Sigmoid colon (tissue), 7 donors: ENCODE measurements at regions of chr22 and their contacts with region 1.

Region 1: GRCh38 chr22:18077639-18078328 is at the start of gene PEX26:
- DNase-seq: peak; percentile 97
- H3K4me3 ChIP-seq: peak within 1 kb of the TSS; percentile 62 to 96 (median 88)
- H3K27ac ChIP-seq: peak within 1 kb of the TSS; percentile 80 to 86 (median 83)
- H3K4me1 ChIP-seq: peaks cover 0 to 39% (median 38%) of the 10 kb centered on the region in 4 donors
- H3K27me3 ChIP-seq: no peaks in the 10 kb centered on the region
- CTCF ChIP-seq: no peak
- EP300 ChIP-seq: no peak
- POLR2A ChIP-seq: peak; percentile 15 to 35
- total RNA-seq, gene PEX26: 13.3 to 21.3 (median 17.7) TPM

Region 2: DNA sequence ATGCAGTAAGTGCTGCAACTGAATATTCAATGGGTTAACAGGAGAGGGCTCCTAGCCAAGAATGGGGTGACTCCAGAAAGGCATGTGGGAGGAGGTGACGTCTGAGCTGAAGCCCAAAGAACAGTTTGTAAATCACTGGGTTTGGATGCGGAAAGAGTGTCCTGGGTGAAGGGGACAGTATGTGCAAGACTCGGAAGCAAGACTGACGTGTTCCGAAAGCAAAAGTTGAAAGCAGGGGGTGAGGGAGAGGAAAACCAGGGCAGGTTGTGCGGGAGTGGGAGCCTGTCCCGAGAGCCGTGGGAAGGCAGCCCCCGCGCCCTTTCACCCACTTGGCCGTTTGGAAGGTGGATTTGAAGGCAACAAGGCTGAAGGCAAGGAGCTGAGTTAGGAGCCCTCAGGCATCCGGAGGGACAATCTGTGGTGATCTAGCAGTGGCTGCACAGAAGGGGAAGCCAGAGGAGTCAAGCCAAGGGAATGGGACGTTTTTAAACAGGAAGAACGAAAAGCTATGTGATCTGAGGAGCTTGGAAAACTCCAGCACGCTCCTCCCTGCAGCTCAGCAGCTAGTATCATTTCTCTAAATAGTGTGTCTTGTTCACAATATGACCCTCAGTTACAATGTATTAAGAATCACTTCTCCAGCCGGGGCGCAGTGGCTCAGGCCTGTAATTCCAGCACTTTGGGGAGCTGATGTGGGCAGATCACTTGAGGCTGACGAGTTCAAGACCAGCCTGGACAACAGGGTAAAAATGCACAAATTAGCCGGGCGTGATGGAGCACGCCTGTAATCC is 506.7 kb before region 1 on chr22:
- intact Hi-C with region 1: loop called (anchors 5 kb)
- DNase-seq: peak; percentile 98
- H3K4me3 ChIP-seq: peak overlapping the region; percentile 17 to 41 (median 37)
- H3K27ac ChIP-seq: peak overlapping the region; percentile 77 to 96 (median 91)
- H3K4me1 ChIP-seq: peaks cover 0 to 31% (median 27%) of the 10 kb centered on the region in 4 donors
- H3K27me3 ChIP-seq: no peaks in the 10 kb centered on the region
- CTCF ChIP-seq: no peak
- EP300 ChIP-seq: peak; percentile 99 to 100 (median 100)
- POLR2A ChIP-seq: peak in 1 of 2 donors; percentile 36

Region 3: DNA sequence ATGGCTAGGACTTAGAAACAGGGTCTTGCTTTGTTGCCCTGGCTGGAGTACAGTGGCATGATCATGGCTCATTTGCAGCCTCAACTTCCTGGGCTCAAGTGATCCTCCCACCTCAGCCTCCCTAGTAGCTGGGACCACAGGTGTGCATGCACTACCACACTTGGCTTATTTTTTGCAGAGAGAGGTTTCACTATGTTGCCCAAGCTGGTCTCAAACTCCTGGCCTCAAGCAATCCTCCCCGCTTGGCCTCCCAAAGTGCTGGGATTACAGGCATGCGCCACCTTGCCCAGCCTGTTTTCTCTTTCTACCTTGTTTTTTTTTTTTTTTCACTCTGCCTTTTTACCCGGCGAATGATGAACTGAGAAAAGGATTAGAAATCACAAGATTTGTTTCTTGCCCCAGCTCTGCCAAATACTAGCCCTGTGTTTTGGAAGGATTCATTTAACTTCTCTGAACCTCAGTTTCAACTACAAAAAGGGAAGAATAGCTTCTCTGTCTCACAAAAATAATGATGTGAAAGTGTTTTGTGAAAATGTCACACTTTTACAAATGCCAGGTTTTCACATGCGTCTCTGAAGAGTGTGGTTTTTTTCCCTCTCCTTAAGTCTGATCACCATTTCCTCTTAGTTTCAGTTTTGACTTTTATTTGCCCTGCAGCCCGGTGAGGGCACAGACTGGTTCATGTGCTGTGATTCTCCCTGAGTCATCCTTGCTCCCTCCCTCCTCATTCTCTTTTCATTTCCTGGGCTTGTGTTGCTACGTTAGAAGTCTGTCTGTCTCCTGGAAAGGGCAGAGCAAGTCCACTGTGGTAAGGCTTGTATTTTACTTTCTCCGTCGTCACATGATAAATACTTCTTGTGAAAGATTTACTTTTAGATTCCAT is 371.5 kb before region 1 on chr22:
- intact Hi-C with region 1: loop called (anchors 10 kb)
- DNase-seq: peak; percentile 75
- H3K4me3 ChIP-seq: peak overlapping the region; percentile 24 to 47 (median 34)
- H3K27ac ChIP-seq: peak overlapping the region; percentile 76 to 84 (median 80)
- H3K4me1 ChIP-seq: peaks cover 0 to 27% (median 23%) of the 10 kb centered on the region in 4 donors
- H3K27me3 ChIP-seq: no peaks in the 10 kb centered on the region
- CTCF ChIP-seq: no peak
- EP300 ChIP-seq: peak in 1 of 4 donors; percentile 23
- POLR2A ChIP-seq: peak in 1 of 2 donors; percentile 47

Region 4: DNA sequence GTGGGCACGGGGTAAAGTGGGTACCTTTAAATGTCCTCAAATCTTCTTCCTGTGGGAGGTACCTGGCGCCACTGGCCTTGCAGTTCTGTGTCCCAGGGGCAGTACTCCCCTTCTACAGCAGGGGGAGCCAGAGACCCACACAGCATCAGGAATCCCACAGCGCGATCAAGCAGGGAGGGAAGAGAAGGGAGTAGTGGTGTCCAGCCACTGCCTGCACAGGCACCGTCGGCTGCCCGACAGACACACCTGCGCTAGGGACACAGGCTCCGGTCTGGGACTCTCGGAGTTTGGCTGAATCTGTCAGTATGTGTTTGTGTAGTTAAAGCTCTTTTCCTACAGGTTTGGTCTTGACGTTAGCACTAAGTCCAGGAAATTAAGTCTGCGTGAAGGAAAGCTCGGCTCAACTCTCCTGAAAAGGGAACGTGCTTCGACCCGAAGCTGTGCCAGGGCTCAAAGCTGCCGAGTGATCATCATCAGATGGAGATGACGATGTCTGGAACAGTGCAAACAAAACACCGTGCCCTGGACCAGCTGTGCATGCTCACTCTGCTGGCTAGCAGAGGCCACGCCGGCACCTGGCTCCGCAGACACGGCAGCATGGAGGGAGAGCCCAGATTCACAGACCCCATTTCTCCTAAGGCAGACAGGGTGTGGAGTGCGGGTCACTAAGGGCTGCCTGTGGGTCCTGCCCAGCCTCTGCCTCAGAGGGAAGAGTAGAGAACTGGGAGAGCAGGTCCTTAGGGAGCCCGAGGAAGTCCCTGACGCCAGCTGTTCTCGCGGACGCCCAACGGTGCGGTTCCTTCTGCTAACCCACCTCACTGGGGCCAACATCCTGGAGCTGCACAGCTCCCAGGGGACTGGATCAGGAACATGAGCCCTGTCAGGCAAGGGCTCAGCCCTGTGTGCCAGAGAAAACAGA is 247.5 kb before region 1 on chr22:
- intact Hi-C with region 1: loop called (anchors 1 kb)
- DNase-seq: peak; percentile 93
- H3K4me3 ChIP-seq: no peak overlapping the region
- H3K27ac ChIP-seq: peak overlapping the region; percentile 69 to 85 (median 80)
- H3K4me1 ChIP-seq: peaks cover 0 to 34% (median 31%) of the 10 kb centered on the region in 4 donors
- H3K27me3 ChIP-seq: no peaks in the 10 kb centered on the region
- CTCF ChIP-seq: peak; percentile 99 to 100 (median 99)
- EP300 ChIP-seq: no peak
- POLR2A ChIP-seq: no peak

Region 5: GRCh38 chr22:17950651-17951214 is 127.1 kb before region 1 on chr22:
- intact Hi-C with region 1: no loop called
- DNase-seq: peak; percentile 75
- H3K4me3 ChIP-seq: no peak overlapping the region
- H3K27ac ChIP-seq: peak overlapping the region; percentile 14 to 50 (median 44)
- H3K4me1 ChIP-seq: peaks cover 0 to 71% (median 45%) of the 10 kb centered on the region in 4 donors
- H3K27me3 ChIP-seq: no peaks in the 10 kb centered on the region
- CTCF ChIP-seq: no peak
- EP300 ChIP-seq: no peak
- POLR2A ChIP-seq: no peak

Region 6: DNA sequence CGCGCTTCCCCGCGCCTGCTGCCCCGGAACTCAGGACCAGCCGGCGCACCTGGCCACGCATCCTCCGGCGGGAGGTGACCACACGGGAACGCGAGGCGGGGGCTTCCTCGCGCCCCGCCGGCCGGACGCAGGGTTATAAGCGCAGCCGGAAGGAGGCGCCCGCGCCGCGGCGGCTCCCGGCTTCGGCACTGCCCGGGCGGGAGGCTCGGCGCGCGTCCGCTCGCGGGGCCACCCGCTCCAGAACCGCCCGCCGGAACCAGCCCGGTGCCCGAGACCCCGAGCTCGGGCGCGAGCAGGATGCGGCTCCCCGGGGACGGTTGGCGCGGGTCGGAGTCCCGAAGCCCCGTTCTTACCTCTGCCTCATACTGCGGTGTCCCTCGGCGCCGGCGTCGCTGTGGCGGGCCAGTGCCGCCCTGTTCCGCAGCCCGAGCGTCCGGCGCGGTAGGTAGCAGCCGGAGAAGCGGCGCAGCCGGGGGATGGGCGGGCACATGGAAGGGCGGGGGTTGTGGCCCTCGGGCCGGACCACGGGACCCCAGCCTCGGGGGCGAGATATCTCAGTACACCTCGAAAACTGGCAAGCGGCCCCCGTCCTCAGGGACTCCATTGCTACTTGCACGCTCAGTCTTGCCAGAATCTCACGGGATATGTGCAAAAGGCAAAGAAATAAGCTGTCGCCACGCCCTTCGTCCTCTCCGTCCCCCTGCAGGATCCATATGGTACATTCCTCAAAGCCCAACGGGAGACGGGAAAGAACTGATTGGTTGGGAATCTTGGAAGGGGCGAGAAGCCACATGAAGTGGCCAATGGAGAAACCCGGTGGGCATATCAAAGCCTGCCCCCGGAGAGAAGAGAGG is 76.5 kb before region 1 on chr22:
- intact Hi-C with region 1: loop called (anchors 5 kb)
- DNase-seq: peak; percentile 97
- H3K4me3 ChIP-seq: peak overlapping the region; percentile 73 to 87 (median 83)
- H3K27ac ChIP-seq: peak overlapping the region; percentile 89 to 94 (median 92)
- H3K4me1 ChIP-seq: peaks cover 0 to 53% (median 38%) of the 10 kb centered on the region in 4 donors
- H3K27me3 ChIP-seq: no peaks in the 10 kb centered on the region
- CTCF ChIP-seq: peak in 2 of 4 experiments; percentile 49 to 61
- EP300 ChIP-seq: no peak
- POLR2A ChIP-seq: peak; percentile 57 to 62

Region 7: DNA sequence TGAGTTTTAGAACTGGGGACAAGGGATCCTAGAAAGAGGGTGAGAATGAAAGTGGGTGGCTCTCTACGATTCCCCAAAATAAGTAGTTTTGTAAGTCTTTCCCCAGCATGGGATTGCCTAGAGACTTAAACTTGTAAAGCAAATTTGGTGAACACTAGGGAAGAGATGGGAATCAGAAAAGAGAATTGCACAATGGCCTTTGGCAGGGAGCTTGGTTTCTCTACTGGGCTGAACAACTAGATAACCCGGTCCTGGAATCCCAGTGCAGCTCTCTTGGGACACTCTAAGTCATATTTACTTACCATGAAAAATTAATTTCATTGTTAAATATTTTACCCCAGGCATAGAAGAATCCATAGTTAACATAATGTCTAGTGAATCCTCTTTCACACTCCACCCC is 55.7 kb after region 1 on chr22:
- intact Hi-C with region 1: no loop called
- DNase-seq: no peak
- H3K4me3 ChIP-seq: no peak overlapping the region
- H3K27ac ChIP-seq: peak overlapping the region in 1 of 4 donors; percentile 32
- H3K4me1 ChIP-seq: no peaks in the 10 kb centered on the region
- H3K27me3 ChIP-seq: no peaks in the 10 kb centered on the region
- CTCF ChIP-seq: no peak
- EP300 ChIP-seq: no peak
- POLR2A ChIP-seq: no peak

Region 8: DNA sequence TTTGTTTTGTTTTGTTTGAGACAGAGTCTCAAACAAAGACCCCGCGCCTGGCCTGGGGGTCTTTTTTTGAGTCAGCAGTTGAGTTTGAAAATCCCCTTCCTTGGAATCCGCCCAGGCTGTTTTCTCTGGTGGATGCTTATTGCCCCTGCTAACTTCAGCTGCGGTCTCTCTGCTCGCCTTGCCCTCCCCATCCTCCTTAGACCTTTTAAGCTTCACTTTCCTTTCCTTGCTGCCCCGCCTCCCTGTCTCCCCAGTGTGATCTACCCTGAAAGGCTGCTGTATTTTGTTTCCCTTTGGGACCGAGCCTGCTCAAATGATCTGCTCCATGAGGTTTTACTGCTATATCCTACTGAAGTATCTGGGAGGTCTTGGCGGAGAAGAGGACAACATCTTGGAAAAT is 74.7 kb after region 1 on chr22:
- intact Hi-C with region 1: loop called (anchors 5 kb)
- DNase-seq: no peak
- H3K4me3 ChIP-seq: no peak overlapping the region
- H3K27ac ChIP-seq: no peak overlapping the region
- H3K4me1 ChIP-seq: peaks cover 0 to 24% (median 17%) of the 10 kb centered on the region in 4 donors
- H3K27me3 ChIP-seq: no peaks in the 10 kb centered on the region
- CTCF ChIP-seq: no peak
- EP300 ChIP-seq: no peak
- POLR2A ChIP-seq: no peak